ENCODE measurements at regions of chr19 and their contacts with region 1.

Region 1: DNA sequence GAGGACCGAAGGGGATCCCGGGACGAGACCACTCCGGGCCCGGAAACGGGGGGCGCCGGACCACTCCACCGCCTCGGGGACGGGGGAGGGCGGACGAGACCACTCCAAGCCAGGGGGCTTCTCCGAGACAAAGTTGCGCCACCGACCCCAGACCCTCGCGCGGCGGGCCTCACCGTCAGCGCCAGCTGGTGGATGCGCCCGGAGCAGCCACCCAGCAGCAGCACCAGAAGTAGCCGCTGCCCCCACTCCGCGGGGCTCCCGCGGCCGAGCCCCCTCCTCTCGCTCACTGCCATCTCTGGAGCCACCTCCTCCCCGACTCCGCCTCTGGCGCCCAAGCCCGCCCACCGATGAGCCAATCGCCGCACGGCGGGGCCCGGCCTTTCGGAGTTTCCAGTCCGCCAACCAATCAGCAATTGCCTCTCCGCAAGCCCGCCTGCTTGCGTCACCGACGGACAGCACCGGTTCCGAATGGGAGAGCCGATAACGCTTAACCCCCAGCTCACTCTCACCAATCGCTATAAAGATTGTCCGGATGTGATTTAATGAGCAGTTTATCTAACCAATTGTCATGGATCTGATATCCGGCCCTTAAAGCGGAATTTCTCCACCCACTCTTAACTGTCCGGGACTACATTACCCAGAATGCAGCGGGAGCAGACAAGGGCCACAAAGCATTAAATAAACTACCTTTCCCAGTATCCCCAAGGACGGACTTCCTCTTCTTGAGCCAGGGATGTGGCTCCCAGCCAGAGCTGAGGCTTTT is at the start of gene GPR108:
- DNase-seq: peak; percentile 97 to 100 (median 99)
- ATAC-seq: peak; percentile 79
- H3K4me3 ChIP-seq: peak within 1 kb of the TSS; percentile 77
- H3K4me3 Mint-ChIP-seq: peak within 1 kb of the TSS; percentile 97
- H3K27ac ChIP-seq: peak within 1 kb of the TSS; percentile 74 to 92
- H3K27ac Mint-ChIP-seq: peak within 1 kb of the TSS; percentile 85
- H3K4me1 ChIP-seq: peaks cover 56% of the 10 kb centered on the region
- H3K4me1 Mint-ChIP-seq: peaks cover 44% of the 10 kb centered on the region
- H3K27me3 ChIP-seq: no peaks in the 10 kb centered on the region
- H3K27me3 Mint-ChIP-seq: no peaks in the 10 kb centered on the region
- CTCF ChIP-seq: no peak
- total RNA-seq, gene GPR108: 34.5 to 36.6 TPM

Region 2: DNA sequence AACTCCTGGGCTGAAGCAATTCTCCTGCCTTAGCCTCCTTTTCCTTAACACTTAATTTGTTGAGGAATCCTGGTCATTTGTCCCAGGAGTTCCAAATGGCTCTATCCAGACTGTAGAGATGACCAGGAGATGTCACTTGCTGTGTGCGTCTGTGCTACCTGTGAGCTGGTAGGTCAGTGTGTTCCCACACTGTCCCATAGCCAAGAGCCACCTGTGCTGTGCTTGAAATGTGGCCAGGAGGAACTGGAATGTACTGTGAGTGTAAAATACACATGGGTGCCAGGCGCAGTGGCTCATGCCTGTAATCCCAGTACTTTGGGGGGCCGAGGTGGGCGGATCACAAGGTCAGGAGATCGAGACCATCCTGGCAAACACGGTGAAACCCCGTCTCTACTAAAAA is 1798.0 kb before region 1 on chr19:
- CTCF ChIA-PET with region 1: no interaction called
- POLR2A ChIA-PET with region 1: no interaction called
- intact Hi-C with region 1: no loop called
- DNase-seq: no peak
- ATAC-seq: no peak
- H3K4me3 ChIP-seq: no peak overlapping the region
- H3K4me3 Mint-ChIP-seq: no peak overlapping the region
- H3K27ac ChIP-seq: no peak overlapping the region
- H3K27ac Mint-ChIP-seq: no peak overlapping the region
- H3K4me1 ChIP-seq: no peaks in the 10 kb centered on the region
- H3K4me1 Mint-ChIP-seq: no peaks in the 10 kb centered on the region
- H3K27me3 ChIP-seq: no peaks in the 10 kb centered on the region
- H3K27me3 Mint-ChIP-seq: no peaks in the 10 kb centered on the region
- CTCF ChIP-seq: no peak

Region 3: DNA sequence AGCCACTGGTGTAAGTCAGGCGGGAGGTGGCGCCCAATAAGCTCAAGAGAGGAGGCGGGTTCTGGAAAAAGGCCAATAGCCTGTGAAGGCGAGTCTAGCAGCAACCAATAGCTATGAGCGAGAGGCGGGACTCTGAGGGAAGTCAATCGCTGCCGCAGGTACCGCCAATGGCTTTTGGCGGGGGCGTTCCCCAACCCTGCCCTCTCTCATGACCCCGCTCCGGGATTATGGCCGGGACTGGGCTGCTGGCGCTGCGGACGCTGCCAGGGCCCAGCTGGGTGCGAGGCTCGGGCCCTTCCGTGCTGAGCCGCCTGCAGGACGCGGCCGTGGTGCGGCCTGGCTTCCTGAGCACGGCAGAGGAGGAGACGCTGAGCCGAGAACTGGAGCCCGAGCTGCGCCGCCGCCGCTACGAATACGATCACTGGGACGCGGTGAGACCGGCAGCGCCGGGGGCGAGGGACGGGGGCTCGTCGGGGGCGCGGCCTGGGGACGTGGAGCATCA is 364.8 kb before region 1 on chr19 and contains the start of gene ALKBH7:
- CTCF ChIA-PET with region 1: no interaction called
- POLR2A ChIA-PET with region 1: no interaction called
- intact Hi-C with region 1: loop called in 1 of 2 experiments (anchors 5 kb)
- DNase-seq: peak; percentile 89 to 100 (median 96)
- ATAC-seq: peak; percentile 75
- H3K4me3 ChIP-seq: peak within 1 kb of the TSS; percentile 66
- H3K4me3 Mint-ChIP-seq: peak within 1 kb of the TSS; percentile 96
- H3K27ac ChIP-seq: peak within 1 kb of the TSS; percentile 84 to 87
- H3K27ac Mint-ChIP-seq: peak within 1 kb of the TSS; percentile 89
- H3K4me1 ChIP-seq: peaks cover 18% of the 10 kb centered on the region
- H3K4me1 Mint-ChIP-seq: peaks cover 19% of the 10 kb centered on the region
- H3K27me3 ChIP-seq: no peaks in the 10 kb centered on the region
- H3K27me3 Mint-ChIP-seq: no peaks in the 10 kb centered on the region
- CTCF ChIP-seq: no peak
- total RNA-seq, gene ALKBH7: 75.3 to 78.7 TPM

Region 4: DNA sequence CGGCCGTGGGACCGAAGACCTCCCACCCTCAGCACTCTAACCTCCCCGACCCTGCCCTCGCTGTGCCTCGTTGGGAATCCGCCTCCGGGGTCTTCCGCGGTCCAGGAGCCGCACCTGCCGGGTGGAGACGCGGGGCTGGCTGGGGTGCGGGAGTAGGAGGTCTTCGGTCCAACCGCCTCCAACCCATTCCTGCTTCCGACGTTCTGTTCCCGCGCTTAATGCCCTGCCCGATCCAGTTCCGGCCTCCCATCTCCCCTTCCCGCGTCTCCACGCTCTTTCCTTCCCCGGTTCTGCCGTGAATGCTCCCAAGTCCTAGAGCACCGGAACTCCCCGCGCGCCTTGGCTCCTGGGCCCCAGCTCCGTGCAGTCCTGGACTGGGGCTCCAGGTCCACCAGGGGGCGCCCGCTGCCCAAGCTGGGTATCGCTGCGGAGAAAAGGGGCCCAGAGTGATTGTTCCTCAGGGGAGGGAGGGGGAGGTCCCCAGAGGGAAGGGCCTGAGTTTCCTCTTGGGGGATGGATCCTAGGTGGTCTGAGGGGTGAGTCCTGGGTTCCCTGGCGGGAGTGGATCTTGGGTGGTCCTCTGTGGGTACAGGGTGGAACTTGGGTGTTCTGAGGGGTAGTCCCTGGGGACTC is 220.7 kb before region 1 on chr19:
- CTCF ChIA-PET with region 1: interaction called, 6 read pairs
- POLR2A ChIA-PET with region 1: interaction called, 11 read pairs
- intact Hi-C with region 1: loop called (anchors 2 to 5 kb)
- DNase-seq: peak; percentile 81 to 95 (median 90)
- ATAC-seq: peak; percentile 91
- H3K4me3 ChIP-seq: peak overlapping the region; percentile 86
- H3K4me3 Mint-ChIP-seq: peak overlapping the region; percentile 94
- H3K27ac ChIP-seq: no peak overlapping the region
- H3K27ac Mint-ChIP-seq: peak overlapping the region; percentile 24
- H3K4me1 ChIP-seq: peaks cover 32% of the 10 kb centered on the region
- H3K4me1 Mint-ChIP-seq: peaks cover 33% of the 10 kb centered on the region
- H3K27me3 ChIP-seq: no peaks in the 10 kb centered on the region
- H3K27me3 Mint-ChIP-seq: no peaks in the 10 kb centered on the region
- CTCF ChIP-seq: peak; percentile 95

Region 5: GRCh38 chr19:6540918-6541689 is 196.4 kb before region 1 on chr19:
- CTCF ChIA-PET with region 1: no interaction called
- POLR2A ChIA-PET with region 1: no interaction called
- intact Hi-C with region 1: no loop called
- DNase-seq: no peak
- ATAC-seq: no peak
- H3K4me3 ChIP-seq: no peak overlapping the region
- H3K4me3 Mint-ChIP-seq: no peak overlapping the region
- H3K27ac ChIP-seq: no peak overlapping the region
- H3K27ac Mint-ChIP-seq: no peak overlapping the region
- H3K4me1 ChIP-seq: peaks cover 20% of the 10 kb centered on the region
- H3K4me1 Mint-ChIP-seq: peaks cover 15% of the 10 kb centered on the region
- H3K27me3 ChIP-seq: peaks cover 0 to 3% of the 10 kb centered on the region in 2 experiments
- H3K27me3 Mint-ChIP-seq: peaks cover 8% of the 10 kb centered on the region
- CTCF ChIP-seq: no peak

Region 6: DNA sequence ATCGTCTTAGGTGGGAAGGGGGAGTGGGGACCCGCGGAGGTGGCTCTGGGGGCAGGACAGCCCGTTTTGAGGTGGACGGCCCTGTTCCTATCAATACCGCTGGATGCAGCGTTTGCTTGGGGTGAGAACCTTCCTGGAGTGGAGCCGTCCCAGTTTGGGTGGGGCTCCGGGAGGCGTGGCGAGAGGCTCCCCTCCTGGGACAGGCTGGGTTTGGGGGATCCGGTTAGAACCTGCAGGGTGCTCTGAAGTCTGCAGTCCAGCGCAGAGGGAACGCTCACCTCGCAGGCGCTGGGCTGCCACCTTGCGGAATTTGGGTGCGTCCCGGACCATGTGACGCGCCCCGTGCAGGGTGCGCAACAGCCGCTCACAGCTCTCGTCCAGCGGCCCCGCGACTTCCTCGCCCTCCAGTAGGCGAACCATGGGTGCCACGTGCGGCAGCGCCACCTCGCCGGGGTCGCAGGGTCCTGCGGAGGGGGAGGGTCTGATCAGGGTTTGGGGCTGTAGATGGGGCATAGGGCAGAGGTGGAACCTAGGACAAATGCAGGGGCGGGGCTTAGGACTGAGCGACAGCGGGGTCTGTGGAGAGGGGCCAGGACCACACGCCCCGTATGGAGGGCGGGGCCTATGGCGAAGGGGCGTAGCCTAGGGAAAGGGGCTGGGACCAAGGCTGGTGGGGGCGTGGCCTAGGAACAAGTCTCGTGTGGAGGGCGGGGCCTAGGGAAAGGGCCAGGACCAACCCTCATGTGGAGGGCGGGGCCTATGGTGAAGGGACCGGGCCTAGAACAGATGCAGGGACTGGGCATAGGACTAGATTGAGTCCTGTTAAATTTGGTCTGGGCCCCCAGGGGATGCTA is 15.9 kb after region 1 on chr19:
- CTCF ChIA-PET with region 1: interaction called, 3 read pairs
- POLR2A ChIA-PET with region 1: interaction called, 5 read pairs
- intact Hi-C with region 1: loop called (anchors 1 to 2 kb)
- DNase-seq: peak; percentile 58 to 89 (median 73)
- ATAC-seq: peak; percentile 92
- H3K4me3 ChIP-seq: peak overlapping the region; percentile 47
- H3K4me3 Mint-ChIP-seq: peak overlapping the region; percentile 79
- H3K27ac ChIP-seq: peak overlapping the region; percentile 2 to 15
- H3K27ac Mint-ChIP-seq: peak overlapping the region; percentile 80
- H3K4me1 ChIP-seq: peaks cover 14% of the 10 kb centered on the region
- H3K4me1 Mint-ChIP-seq: peaks cover 11% of the 10 kb centered on the region
- H3K27me3 ChIP-seq: no peaks in the 10 kb centered on the region
- H3K27me3 Mint-ChIP-seq: no peaks in the 10 kb centered on the region
- CTCF ChIP-seq: peak; percentile 59

Region 7: GRCh38 chr19:6787393-6787792 is 49.9 kb after region 1 on chr19:
- CTCF ChIA-PET with region 1: no interaction called
- POLR2A ChIA-PET with region 1: no interaction called
- intact Hi-C with region 1: no loop called
- DNase-seq: no peak
- ATAC-seq: no peak
- H3K4me3 ChIP-seq: no peak overlapping the region
- H3K4me3 Mint-ChIP-seq: no peak overlapping the region
- H3K27ac ChIP-seq: no peak overlapping the region
- H3K27ac Mint-ChIP-seq: peak overlapping the region; percentile 27
- H3K4me1 ChIP-seq: peaks cover 52% of the 10 kb centered on the region
- H3K4me1 Mint-ChIP-seq: peaks cover 64% of the 10 kb centered on the region
- H3K27me3 ChIP-seq: no peaks in the 10 kb centered on the region
- H3K27me3 Mint-ChIP-seq: no peaks in the 10 kb centered on the region
- CTCF ChIP-seq: no peak

Region 8: DNA sequence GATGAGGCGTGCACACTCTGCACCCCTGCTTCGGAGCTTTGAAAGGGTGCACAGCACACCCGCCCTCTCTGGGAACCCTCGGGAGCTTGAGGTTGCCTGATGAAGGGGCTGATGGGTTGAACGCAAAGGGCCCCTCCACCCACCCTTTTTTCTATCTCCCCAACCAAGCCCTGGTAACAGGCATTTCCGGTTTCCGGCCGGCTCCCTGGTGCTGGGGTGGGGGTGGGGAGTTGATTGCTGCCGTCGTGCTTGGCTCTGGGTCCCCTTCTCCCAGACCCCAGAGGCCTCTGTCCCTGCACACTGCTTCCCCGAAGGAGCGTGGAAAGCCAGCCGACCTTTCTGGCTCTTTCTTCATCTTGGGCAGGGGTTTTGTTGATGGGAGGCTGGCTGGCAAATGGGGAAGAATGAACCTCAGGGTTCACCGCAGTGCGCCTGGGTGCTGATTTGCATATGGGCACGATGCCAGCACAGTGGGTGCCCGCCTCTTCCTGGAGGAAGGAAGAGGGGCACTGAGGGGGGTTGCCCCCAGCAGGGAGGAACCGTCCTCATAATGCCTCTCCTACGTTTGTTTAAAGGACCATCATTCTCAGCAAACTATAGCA is 64.1 kb after region 1 on chr19:
- CTCF ChIA-PET with region 1: interaction called, 6 read pairs
- POLR2A ChIA-PET with region 1: interaction called, 30 read pairs
- intact Hi-C with region 1: loop called in 1 of 2 experiments (anchors 1 kb)
- DNase-seq: peak; percentile 55 to 92 (median 78)
- ATAC-seq: peak; percentile 84
- H3K4me3 ChIP-seq: peak overlapping the region; percentile 49
- H3K4me3 Mint-ChIP-seq: peak overlapping the region; percentile 91
- H3K27ac ChIP-seq: peak overlapping the region; percentile 43 to 92
- H3K27ac Mint-ChIP-seq: peak overlapping the region; percentile 93
- H3K4me1 ChIP-seq: peaks cover 76% of the 10 kb centered on the region
- H3K4me1 Mint-ChIP-seq: peaks cover 69% of the 10 kb centered on the region
- H3K27me3 ChIP-seq: no peaks in the 10 kb centered on the region
- H3K27me3 Mint-ChIP-seq: no peaks in the 10 kb centered on the region
- CTCF ChIP-seq: no peak

Region 9: DNA sequence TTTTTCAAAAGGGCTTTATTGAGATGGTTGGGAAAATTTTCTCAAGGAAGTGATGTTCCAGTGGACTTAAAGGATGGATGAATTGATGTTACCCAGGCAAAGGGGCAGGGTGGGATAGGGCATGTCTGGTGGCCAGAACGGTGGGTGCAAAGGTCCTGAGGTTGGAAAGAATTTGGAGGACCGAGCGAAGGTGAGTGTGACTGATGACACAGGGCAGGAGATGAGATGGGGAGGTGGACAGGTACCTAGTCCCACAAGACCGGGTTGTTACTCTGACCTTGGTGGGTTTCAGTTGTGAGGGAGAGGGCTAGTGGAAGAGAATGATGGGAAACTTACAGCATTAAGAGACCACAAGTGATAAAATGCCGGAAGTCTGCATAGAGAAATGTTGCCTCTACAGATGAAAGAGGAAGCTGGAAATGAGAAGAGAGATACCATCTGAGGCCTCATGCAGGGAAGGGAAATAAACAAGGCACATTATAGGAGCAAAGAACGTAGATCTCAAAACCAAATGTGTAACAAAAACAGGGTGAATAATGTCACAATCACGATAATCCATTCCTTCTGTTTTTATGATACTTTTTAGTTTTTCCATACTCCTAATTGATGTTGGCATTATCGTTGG is 154.4 kb after region 1 on chr19:
- CTCF ChIA-PET with region 1: no interaction called
- POLR2A ChIA-PET with region 1: interaction called, 22 read pairs
- intact Hi-C with region 1: no loop called
- DNase-seq: peak in 4 of 14 experiments; percentile 14 to 70 (median 56)
- ATAC-seq: peak; percentile 59
- H3K4me3 ChIP-seq: no peak overlapping the region
- H3K4me3 Mint-ChIP-seq: peak overlapping the region; percentile 32
- H3K27ac ChIP-seq: peak overlapping the region; percentile 39 to 64
- H3K27ac Mint-ChIP-seq: peak overlapping the region; percentile 84
- H3K4me1 ChIP-seq: peaks cover 67% of the 10 kb centered on the region
- H3K4me1 Mint-ChIP-seq: peaks cover 93% of the 10 kb centered on the region
- H3K27me3 ChIP-seq: no peaks in the 10 kb centered on the region
- H3K27me3 Mint-ChIP-seq: no peaks in the 10 kb centered on the region
- CTCF ChIP-seq: no peak

Measured in CD4-positive, alpha-beta T cell (primary cell).